Heart left ventricle (tissue), 16 donors: ENCODE measurements at regions of chr17 and their contacts with region 1.

Region 1: DNA sequence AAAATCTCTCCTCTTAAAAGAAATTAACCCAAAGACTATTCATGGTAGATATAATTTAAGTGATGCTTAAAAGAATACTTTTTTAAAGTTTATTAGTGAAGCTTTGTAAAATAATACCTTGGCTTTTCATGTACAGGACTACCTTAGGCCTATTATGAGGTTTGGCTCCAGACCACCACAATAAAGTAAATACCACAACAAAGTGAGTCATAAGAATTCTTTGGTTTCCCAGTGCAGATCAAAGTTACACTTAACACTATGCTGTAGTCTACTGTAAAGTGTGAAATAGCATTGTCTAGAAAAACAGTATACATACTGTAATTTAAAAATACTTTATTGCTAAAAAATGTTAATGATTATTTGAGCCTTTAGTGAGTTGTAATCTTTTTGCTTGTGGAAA is 31.7 kb downstream of the CLTC start:
- DNase-seq: no peak
- ATAC-seq: no peak
- H3K4me3 ChIP-seq: no peak overlapping the region
- H3K27ac ChIP-seq: no peak overlapping the region
- H3K4me1 ChIP-seq: peaks cover 0 to 14% (median 7%) of the 10 kb centered on the region in 12 donors
- H3K27me3 ChIP-seq: no peaks in the 10 kb centered on the region
- CTCF ChIP-seq: no peak
- POLR2A ChIP-seq: no peak

Region 2: DNA sequence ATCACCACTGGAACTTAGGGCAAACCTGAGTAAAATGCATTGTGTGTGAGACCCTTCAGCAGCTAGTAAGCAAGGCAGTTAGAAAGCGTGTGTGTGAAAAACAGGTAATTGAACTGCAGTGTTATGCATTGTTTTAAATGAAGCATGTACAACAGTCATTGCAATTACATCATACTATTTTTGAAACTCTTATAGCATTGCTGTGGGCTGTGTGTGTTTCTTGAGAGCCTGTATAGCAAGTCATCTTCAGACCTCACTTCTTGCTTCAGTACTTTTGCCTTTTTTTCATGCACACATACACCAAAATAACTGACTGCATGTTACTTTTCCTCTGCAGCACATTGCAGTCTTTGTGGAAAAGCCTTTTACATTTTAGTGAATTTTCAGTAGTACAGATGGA is 36.7 kb after region 1 on chr17:
- intact Hi-C with region 1: loop called in 3 of 10 experiments (anchors 5 kb)
- DNase-seq: no peak
- ATAC-seq: peak in 1 of 4 donors; percentile 20
- H3K4me3 ChIP-seq: no peak overlapping the region
- H3K27ac ChIP-seq: peak overlapping the region in 1 of 12 donors; percentile 0
- H3K4me1 ChIP-seq: peaks cover 0 to 3% (median 0%) of the 10 kb centered on the region in 12 donors
- H3K27me3 ChIP-seq: no peaks in the 10 kb centered on the region
- CTCF ChIP-seq: no peak
- POLR2A ChIP-seq: no peak

Region 3: GRCh38 chr17:59693582-59693981 is 42.2 kb after region 1 on chr17:
- intact Hi-C with region 1: loop called in 3 of 10 experiments (anchors 5 kb)
- DNase-seq: no peak
- ATAC-seq: no peak
- H3K4me3 ChIP-seq: no peak overlapping the region
- H3K27ac ChIP-seq: no peak overlapping the region
- H3K4me1 ChIP-seq: peaks cover 0 to 9% (median 0%) of the 10 kb centered on the region in 12 donors
- H3K27me3 ChIP-seq: no peaks in the 10 kb centered on the region
- CTCF ChIP-seq: no peak
- POLR2A ChIP-seq: no peak

Region 4: GRCh38 chr17:59725691-59726090 is 74.3 kb after region 1 on chr17:
- intact Hi-C with region 1: no loop called
- DNase-seq: no peak
- ATAC-seq: peak in 2 of 4 donors; percentile 42 to 54
- H3K4me3 ChIP-seq: no peak overlapping the region
- H3K27ac ChIP-seq: peak overlapping the region in 7 of 12 donors; percentile 2 to 83 (median 16)
- H3K4me1 ChIP-seq: peaks cover 0 to 85% (median 0%) of the 10 kb centered on the region in 12 donors
- H3K27me3 ChIP-seq: no peaks in the 10 kb centered on the region
- CTCF ChIP-seq: no peak
- POLR2A ChIP-seq: no peak

Region 5: DNA sequence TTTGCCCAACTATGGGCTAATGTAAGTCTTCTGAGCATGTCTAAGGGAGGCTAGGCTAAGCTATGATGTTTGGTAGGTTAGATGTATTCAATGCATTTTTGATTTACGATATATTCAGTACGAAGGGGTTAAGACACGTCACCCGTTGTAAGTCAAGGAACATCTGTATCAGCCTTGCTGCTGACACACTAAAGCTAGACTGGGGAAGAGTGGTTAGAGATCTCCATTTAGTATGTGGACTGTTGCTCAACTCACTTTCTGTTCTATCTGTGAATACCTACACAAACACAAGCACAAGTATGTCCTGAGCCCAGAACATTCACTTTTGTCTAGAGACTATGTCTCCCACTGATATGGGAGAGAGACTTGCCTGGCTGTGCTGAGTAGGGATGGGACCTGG is 127.7 kb after region 1 on chr17:
- intact Hi-C with region 1: no loop called
- DNase-seq: no peak
- ATAC-seq: no peak
- H3K4me3 ChIP-seq: no peak overlapping the region
- H3K27ac ChIP-seq: peak overlapping the region in 1 of 12 donors; percentile 16
- H3K4me1 ChIP-seq: peaks cover 0 to 17% (median 9%) of the 10 kb centered on the region in 12 donors
- H3K27me3 ChIP-seq: no peaks in the 10 kb centered on the region
- CTCF ChIP-seq: no peak
- POLR2A ChIP-seq: no peak

Region 6: GRCh38 chr17:60049936-60050335 is 398.6 kb after region 1 on chr17:
- intact Hi-C with region 1: loop called in 1 of 10 experiments (anchors 10 kb)
- DNase-seq: no peak
- ATAC-seq: no peak
- H3K4me3 ChIP-seq: no peak overlapping the region
- H3K27ac ChIP-seq: no peak overlapping the region
- H3K4me1 ChIP-seq: no peaks in the 10 kb centered on the region
- H3K27me3 ChIP-seq: no peaks in the 10 kb centered on the region
- CTCF ChIP-seq: no peak
- POLR2A ChIP-seq: no peak